Transverse colon (tissue), 4 donors: ENCODE measurements at regions of chr7 and their contacts with region 1.

Region 1: GRCh38 chr7:128103498-128104034 is 72.3 kb upstream of the LRRC4 start:
- DNase-seq: no peak
- H3K4me3 ChIP-seq: peak overlapping the region in 3 of 4 donors; percentile 9 to 47 (median 26)
- H3K27ac ChIP-seq: no peak overlapping the region
- H3K4me1 ChIP-seq: peaks cover 0 to 13% (median 11%) of the 10 kb centered on the region in 4 donors
- H3K27me3 ChIP-seq: peaks cover 48% of the 10 kb centered on the region
- CTCF ChIP-seq: no peak
- EP300 ChIP-seq: no peak
- POLR2A ChIP-seq: no peak

Region 2: GRCh38 chr7:127635659-127636285 is 467.8 kb before region 1 on chr7:
- in situ Hi-C with region 1: no loop called
- intact Hi-C with region 1: loop called (anchors 2 kb)
- DNase-seq: no peak
- H3K4me3 ChIP-seq: no peak overlapping the region
- H3K27ac ChIP-seq: no peak overlapping the region
- H3K4me1 ChIP-seq: no peaks in the 10 kb centered on the region
- H3K27me3 ChIP-seq: peaks cover 11% of the 10 kb centered on the region
- CTCF ChIP-seq: no peak
- EP300 ChIP-seq: no peak
- POLR2A ChIP-seq: no peak

Region 3: GRCh38 chr7:128155100-128155740 is 51.7 kb after region 1 on chr7:
- in situ Hi-C with region 1: no loop called
- intact Hi-C with region 1: no loop called
- DNase-seq: no peak
- H3K4me3 ChIP-seq: no peak overlapping the region
- H3K27ac ChIP-seq: no peak overlapping the region
- H3K4me1 ChIP-seq: no peaks in the 10 kb centered on the region
- H3K27me3 ChIP-seq: peaks cover 10% of the 10 kb centered on the region
- CTCF ChIP-seq: no peak
- EP300 ChIP-seq: no peak
- POLR2A ChIP-seq: no peak